Naive thymus-derived CD4-positive, alpha-beta T cell (primary cell): ENCODE measurements at regions of chr2 and their contacts with region 1.

Region 1: DNA sequence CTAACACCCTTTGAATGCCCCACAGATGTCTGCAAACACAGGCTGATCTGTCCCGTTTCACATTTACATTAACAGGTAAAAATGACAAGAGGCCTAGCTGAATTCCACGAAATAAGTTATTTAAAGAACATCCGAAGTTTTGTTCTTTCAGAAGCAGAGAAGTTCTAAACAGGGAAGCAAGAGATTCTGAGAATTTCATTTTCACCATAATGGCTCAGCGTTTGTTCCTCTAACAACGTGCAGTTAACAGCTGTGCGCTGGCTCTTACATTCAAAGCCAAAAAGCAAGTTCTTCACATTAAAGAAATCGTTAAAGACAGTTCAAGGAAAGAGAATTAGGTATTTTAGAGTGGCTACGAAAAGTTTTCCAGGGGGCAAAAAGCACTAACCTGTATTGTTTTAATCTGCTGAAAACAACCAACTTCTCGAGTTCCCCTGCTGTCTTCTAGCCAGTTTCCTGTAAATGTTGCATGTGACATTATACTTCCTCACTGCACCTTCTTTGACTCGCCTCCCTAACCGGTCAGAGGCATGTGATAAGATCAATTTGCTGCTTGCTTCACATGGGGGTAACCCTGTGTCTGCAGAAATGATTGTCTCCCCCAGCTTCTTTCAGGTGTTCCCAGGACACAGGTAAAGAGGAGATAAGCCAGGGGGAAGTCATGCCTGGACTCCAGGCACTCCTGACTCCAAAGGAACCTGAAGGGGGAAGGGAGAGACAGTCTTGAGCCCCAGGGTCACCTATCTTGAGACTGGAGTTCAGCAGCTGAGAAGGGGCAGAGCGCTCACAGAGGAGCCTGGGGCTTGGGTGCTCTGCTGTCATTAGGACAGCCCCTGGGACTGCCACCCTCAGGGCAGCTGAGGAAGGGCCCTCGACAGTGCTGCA is 36.8 kb upstream of the WIPF1 start:
- DNase-seq: peak in 8 of 9 donors; percentile 42 to 66 (median 54)
- ATAC-seq: peak; percentile 83
- H3K4me3 ChIP-seq: peak overlapping the region; percentile 78
- H3K4me3 Mint-ChIP-seq: peak overlapping the region; percentile 90 to 100 (median 93)
- H3K27ac ChIP-seq: peak overlapping the region; percentile 82
- H3K27ac Mint-ChIP-seq: peak overlapping the region; percentile 94 to 99 (median 96)
- H3K4me1 ChIP-seq: peaks cover 44% of the 10 kb centered on the region in 2 donors
- H3K4me1 Mint-ChIP-seq: peaks cover 46 to 77% (median 72%) of the 10 kb centered on the region in 7 donors
- H3K27me3 ChIP-seq: no peaks in the 10 kb centered on the region
- H3K27me3 Mint-ChIP-seq: no peaks in the 10 kb centered on the region

Region 2: DNA sequence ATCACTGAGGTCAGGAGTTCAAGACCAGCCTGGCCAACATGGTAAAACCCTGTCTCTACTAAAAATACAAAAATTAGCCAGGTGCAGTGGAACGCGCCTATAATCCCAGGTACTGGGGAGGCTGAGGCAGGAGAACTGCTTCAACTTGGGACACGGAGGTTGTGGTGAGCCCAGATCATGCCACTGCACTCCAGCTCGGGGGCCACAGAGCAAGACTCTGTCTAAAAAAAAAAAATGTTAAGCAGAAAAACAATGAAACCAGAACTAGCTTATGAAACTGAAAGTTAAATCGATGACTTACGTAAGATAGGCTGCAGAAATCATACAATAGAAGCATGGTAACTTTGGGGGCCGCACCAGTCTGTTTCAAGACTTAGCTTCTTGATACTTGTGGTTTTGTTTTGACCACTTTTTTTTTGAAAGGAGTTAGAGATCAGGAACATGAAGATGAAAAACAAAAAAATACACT is 141.4 kb before region 1 on chr2:
- CTCF ChIA-PET with region 1: no interaction called
- POLR2A ChIA-PET with region 1: interaction called, 4 read pairs
- intact Hi-C with region 1: loop called in 1 of 2 experiments (anchors 1 kb)
- DNase-seq: peak; percentile 18 to 89 (median 85)
- ATAC-seq: peak; percentile 95
- H3K4me3 ChIP-seq: peak overlapping the region; percentile 36
- H3K4me3 Mint-ChIP-seq: peak overlapping the region; percentile 74 to 92 (median 87)
- H3K27ac ChIP-seq: peak overlapping the region; percentile 85
- H3K27ac Mint-ChIP-seq: peak overlapping the region; percentile 91 to 100 (median 98)
- H3K4me1 ChIP-seq: peaks cover 49 to 50% of the 10 kb centered on the region in 2 donors
- H3K4me1 Mint-ChIP-seq: peaks cover 40 to 87% (median 77%) of the 10 kb centered on the region in 7 donors
- H3K27me3 ChIP-seq: no peaks in the 10 kb centered on the region
- H3K27me3 Mint-ChIP-seq: no peaks in the 10 kb centered on the region

Region 3: GRCh38 chr2:174561283-174561971 is 72.9 kb before region 1 on chr2:
- CTCF ChIA-PET with region 1: no interaction called
- POLR2A ChIA-PET with region 1: no interaction called
- intact Hi-C with region 1: no loop called
- DNase-seq: no peak
- ATAC-seq: no peak
- H3K4me3 ChIP-seq: no peak overlapping the region
- H3K4me3 Mint-ChIP-seq: no peak overlapping the region
- H3K27ac ChIP-seq: no peak overlapping the region
- H3K27ac Mint-ChIP-seq: peak overlapping the region; percentile 33 to 82 (median 63)
- H3K4me1 ChIP-seq: peaks cover 0 to 3% of the 10 kb centered on the region in 2 donors
- H3K4me1 Mint-ChIP-seq: peaks cover 4 to 13% (median 10%) of the 10 kb centered on the region in 7 donors
- H3K27me3 ChIP-seq: no peaks in the 10 kb centered on the region
- H3K27me3 Mint-ChIP-seq: no peaks in the 10 kb centered on the region

Region 4: GRCh38 chr2:174593574-174594203 is 40.7 kb before region 1 on chr2:
- CTCF ChIA-PET with region 1: interaction called, 8 read pairs
- POLR2A ChIA-PET with region 1: interaction called, 66 read pairs
- intact Hi-C with region 1: loop called (anchors 1 kb)
- DNase-seq: peak in 8 of 9 donors; percentile 53 to 92 (median 90)
- ATAC-seq: peak; percentile 87
- H3K4me3 ChIP-seq: peak overlapping the region; percentile 59
- H3K4me3 Mint-ChIP-seq: peak overlapping the region; percentile 87 to 100 (median 92)
- H3K27ac ChIP-seq: peak overlapping the region; percentile 90
- H3K27ac Mint-ChIP-seq: peak overlapping the region; percentile 90 to 99 (median 97)
- H3K4me1 ChIP-seq: peaks cover 42 to 44% of the 10 kb centered on the region in 2 donors
- H3K4me1 Mint-ChIP-seq: peaks cover 47 to 69% (median 59%) of the 10 kb centered on the region in 7 donors
- H3K27me3 ChIP-seq: no peaks in the 10 kb centered on the region
- H3K27me3 Mint-ChIP-seq: no peaks in the 10 kb centered on the region

Region 5: DNA sequence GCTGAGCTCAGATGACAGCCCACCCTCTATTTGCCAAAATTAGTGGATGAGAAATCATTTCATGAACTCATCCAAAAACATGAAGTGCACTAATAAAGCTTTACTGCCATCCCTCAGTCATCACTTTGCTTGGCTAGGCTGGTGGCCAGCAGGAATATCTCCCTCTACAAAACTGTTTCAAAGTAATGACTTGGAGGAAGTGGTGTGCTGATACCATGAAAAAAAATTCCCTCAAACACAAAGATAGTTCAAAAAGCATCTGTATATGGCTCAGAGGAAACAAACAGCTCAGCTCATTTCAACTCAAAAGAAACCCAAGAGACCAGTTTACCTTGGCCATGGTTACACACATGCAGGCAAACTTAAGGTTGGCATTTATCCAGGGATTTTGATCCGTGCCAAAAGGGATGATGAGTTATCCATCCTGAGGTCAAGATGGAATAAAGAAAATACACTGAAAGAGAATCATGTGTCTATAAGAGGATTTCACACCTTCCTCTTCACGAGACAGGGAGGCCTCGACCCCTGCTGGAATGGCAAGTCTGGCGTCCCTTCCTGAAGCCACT is 18.4 kb before region 1 on chr2:
- CTCF ChIA-PET with region 1: interaction called, 5 read pairs
- POLR2A ChIA-PET with region 1: interaction called, 6 read pairs
- intact Hi-C with region 1: loop called (anchors 1 kb)
- DNase-seq: peak in 2 of 9 donors; percentile 34 to 40
- ATAC-seq: peak; percentile 76
- H3K4me3 ChIP-seq: no peak overlapping the region
- H3K4me3 Mint-ChIP-seq: peak overlapping the region in 9 of 10 donors; percentile 29 to 76 (median 48)
- H3K27ac ChIP-seq: peak overlapping the region; percentile 46
- H3K27ac Mint-ChIP-seq: peak overlapping the region; percentile 9 to 92 (median 83)
- H3K4me1 ChIP-seq: peaks cover 50 to 57% of the 10 kb centered on the region in 2 donors
- H3K4me1 Mint-ChIP-seq: peaks cover 60 to 100% (median 94%) of the 10 kb centered on the region in 7 donors
- H3K27me3 ChIP-seq: no peaks in the 10 kb centered on the region
- H3K27me3 Mint-ChIP-seq: no peaks in the 10 kb centered on the region

Region 6: DNA sequence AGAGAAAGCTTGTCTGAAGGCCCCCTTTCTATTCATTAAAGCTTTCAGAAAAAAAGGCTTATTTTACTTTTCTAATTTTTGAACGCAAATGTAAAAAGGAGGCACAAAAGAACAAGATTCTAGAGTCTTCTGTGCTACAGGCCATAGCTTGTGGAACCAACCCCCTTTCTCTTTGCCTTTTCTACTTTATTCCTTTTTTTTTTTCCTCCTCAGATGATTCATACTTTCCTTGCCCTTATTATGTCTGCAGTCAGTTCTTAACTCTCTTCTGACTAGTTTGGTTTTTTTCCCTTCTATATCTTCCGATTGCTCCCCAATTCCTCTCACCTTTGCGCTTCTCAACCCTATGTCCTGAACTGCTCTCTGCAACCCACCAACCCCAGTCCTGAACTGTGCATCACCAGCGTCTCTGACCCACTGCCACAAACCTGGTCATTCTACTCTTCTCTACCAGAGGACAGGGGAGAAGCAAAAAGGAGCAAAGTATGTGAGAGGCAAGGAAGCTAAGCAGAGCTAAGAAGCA is 20.1 kb after region 1 on chr2:
- CTCF ChIA-PET with region 1: no interaction called
- POLR2A ChIA-PET with region 1: interaction called, 17 read pairs
- intact Hi-C with region 1: loop called in 1 of 2 experiments (anchors 2 kb)
- DNase-seq: no peak
- ATAC-seq: no peak
- H3K4me3 ChIP-seq: no peak overlapping the region
- H3K4me3 Mint-ChIP-seq: no peak overlapping the region
- H3K27ac ChIP-seq: no peak overlapping the region
- H3K27ac Mint-ChIP-seq: peak overlapping the region in 3 of 9 donors; percentile 26 to 76 (median 29)
- H3K4me1 ChIP-seq: peaks cover 0 to 6% of the 10 kb centered on the region in 2 donors
- H3K4me1 Mint-ChIP-seq: peaks cover 20 to 49% (median 41%) of the 10 kb centered on the region in 7 donors
- H3K27me3 ChIP-seq: no peaks in the 10 kb centered on the region
- H3K27me3 Mint-ChIP-seq: no peaks in the 10 kb centered on the region

Region 7: GRCh38 chr2:174688079-174688478 is 53.7 kb after region 1 on chr2:
- CTCF ChIA-PET with region 1: interaction called, 7 read pairs
- POLR2A ChIA-PET with region 1: interaction called, 5 read pairs
- intact Hi-C with region 1: loop called (anchors 1 kb)
- DNase-seq: peak in 6 of 9 donors; percentile 36 to 63 (median 45)
- ATAC-seq: peak; percentile 73
- H3K4me3 ChIP-seq: no peak overlapping the region
- H3K4me3 Mint-ChIP-seq: peak overlapping the region in 1 of 10 donors; percentile 40
- H3K27ac ChIP-seq: no peak overlapping the region
- H3K27ac Mint-ChIP-seq: peak overlapping the region in 7 of 9 donors; percentile 14 to 82 (median 21)
- H3K4me1 ChIP-seq: peaks cover 0 to 6% of the 10 kb centered on the region in 2 donors
- H3K4me1 Mint-ChIP-seq: peaks cover 19 to 45% (median 30%) of the 10 kb centered on the region in 7 donors
- H3K27me3 ChIP-seq: no peaks in the 10 kb centered on the region
- H3K27me3 Mint-ChIP-seq: peaks cover 0 to 6% (median 0%) of the 10 kb centered on the region in 5 donors

Region 8: GRCh38 chr2:174873471-174873870 is 239.1 kb after region 1 on chr2:
- CTCF ChIA-PET with region 1: no interaction called
- POLR2A ChIA-PET with region 1: no interaction called
- intact Hi-C with region 1: no loop called
- DNase-seq: no peak
- ATAC-seq: no peak
- H3K4me3 ChIP-seq: no peak overlapping the region
- H3K4me3 Mint-ChIP-seq: no peak overlapping the region
- H3K27ac ChIP-seq: no peak overlapping the region
- H3K27ac Mint-ChIP-seq: no peak overlapping the region
- H3K4me1 ChIP-seq: no peaks in the 10 kb centered on the region
- H3K4me1 Mint-ChIP-seq: no peaks in the 10 kb centered on the region
- H3K27me3 ChIP-seq: no peaks in the 10 kb centered on the region
- H3K27me3 Mint-ChIP-seq: peaks cover 0 to 4% (median 0%) of the 10 kb centered on the region in 5 donors

Region 9: DNA sequence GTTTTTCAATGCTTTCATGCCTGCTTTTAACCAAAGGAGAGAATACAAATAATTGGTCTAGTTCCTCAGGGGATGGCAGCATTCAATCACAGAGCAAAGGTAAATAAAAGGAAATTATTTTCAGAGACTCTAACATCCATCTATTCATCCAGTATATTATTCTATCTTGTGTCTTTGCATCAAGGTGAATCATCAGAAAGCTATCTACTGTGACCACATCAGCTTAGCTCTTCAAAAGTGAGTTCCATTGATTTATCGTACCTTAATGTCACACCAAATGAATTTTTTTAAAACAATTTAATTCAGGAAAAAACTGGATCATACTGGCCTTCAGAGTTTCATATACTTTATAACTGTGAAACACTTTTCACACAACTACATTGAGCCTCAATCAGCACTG is 304.7 kb after region 1 on chr2:
- CTCF ChIA-PET with region 1: no interaction called
- POLR2A ChIA-PET with region 1: no interaction called
- intact Hi-C with region 1: no loop called
- DNase-seq: no peak
- ATAC-seq: no peak
- H3K4me3 ChIP-seq: no peak overlapping the region
- H3K4me3 Mint-ChIP-seq: no peak overlapping the region
- H3K27ac ChIP-seq: no peak overlapping the region
- H3K27ac Mint-ChIP-seq: no peak overlapping the region
- H3K4me1 ChIP-seq: no peaks in the 10 kb centered on the region
- H3K4me1 Mint-ChIP-seq: no peaks in the 10 kb centered on the region
- H3K27me3 ChIP-seq: no peaks in the 10 kb centered on the region
- H3K27me3 Mint-ChIP-seq: peaks cover 0 to 5% (median 3%) of the 10 kb centered on the region in 5 donors